ENCODE measurements at regions of chr13 and their contacts with region 1.

Region 1: DNA sequence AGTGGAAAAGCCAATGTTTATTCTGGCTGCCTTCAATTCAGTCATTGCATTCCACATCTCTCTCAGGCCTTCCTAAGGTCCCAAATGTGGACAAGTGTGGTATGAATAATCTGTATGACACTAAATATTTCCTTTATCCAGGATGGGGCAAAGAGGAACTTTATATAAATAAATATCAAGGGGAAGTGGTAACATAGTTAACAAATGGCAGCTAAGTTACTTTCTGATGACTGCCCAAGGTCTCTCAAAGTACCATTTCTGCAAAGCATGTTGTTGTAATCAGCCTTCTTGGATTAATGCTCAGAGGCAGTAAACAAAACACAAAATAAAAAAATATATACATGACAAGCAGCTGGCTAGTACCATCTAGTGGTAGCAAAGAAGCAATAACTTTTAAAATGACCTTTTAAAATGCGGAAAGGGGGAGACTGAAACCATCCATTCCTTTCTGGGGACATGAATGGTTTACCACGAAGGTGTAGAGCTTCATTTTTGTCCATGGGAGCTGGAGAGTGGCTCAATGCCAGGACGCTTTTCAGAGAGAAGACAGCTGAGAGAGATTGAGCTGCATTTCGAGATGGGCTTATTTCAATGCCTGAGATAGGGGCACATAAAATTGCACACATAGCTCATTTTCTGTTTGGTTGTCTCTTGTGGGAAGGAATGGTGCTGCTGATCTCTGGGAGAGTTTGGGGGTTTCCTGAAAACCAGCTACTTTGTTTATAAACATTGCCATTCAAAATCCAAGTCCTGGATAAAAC is 259.2 kb downstream of the RFC3 start:
- DNase-seq: no peak
- ATAC-seq: peak in 2 of 8 donors; percentile 33 to 57
- H3K4me3 ChIP-seq: no peak overlapping the region
- H3K27ac ChIP-seq: no peak overlapping the region
- H3K4me1 ChIP-seq: peaks cover 0 to 11% (median 5%) of the 10 kb centered on the region in 9 donors
- H3K27me3 ChIP-seq: no peaks in the 10 kb centered on the region
- CTCF ChIP-seq: peak; percentile 40 to 82 (median 61)

Region 2: DNA sequence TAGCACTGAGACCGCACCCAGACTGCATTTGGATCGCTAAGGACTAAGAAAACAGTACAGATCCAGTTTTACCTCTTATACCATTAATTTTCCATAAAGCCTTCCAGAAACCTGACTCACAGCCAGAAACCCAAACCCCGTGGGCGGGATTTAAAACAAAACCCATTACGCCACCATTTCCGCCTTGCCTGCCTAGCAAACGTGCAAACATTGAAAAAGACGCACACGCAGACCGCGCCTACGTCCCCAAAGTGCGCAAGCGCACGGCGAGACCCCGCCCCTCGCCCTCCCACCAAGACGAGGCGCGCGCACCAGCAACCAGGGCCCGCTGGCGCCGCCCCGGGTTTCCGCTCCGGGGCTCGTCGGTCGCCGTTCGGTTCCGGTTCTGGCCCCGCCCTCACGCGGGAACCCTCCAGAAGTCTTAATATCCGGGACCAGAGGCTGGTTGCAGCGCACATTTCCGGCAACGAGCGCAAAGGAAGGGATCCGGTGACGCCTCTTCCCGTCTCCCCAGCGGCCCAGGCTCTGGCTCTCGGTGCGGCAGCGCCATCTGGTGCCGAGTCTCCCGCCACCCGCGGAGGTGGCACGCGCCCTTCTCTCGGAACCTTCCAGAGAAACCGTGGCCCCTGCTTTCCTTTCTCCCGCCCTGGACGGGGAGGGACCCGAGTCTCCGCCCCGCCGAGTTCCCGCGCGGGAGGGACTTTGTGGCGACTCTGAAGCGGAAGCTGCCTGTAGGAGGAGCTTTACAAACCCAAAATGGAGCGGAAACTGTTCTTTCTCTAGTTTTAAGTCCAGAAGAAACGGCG is 534.6 kb before region 1 on chr13:
- intact Hi-C with region 1: loop called in 1 of 10 experiments (anchors 10 kb)
- DNase-seq: peak; percentile 98 to 99
- ATAC-seq: peak; percentile 94 to 98 (median 96)
- H3K4me3 ChIP-seq: peak overlapping the region; percentile 11 to 62 (median 52)
- H3K27ac ChIP-seq: peak overlapping the region; percentile 92 to 99 (median 96)
- H3K4me1 ChIP-seq: peaks cover 2 to 45% (median 33%) of the 10 kb centered on the region in 9 donors
- H3K27me3 ChIP-seq: no peaks in the 10 kb centered on the region
- CTCF ChIP-seq: peak; percentile 75 to 97 (median 92)

Region 3: DNA sequence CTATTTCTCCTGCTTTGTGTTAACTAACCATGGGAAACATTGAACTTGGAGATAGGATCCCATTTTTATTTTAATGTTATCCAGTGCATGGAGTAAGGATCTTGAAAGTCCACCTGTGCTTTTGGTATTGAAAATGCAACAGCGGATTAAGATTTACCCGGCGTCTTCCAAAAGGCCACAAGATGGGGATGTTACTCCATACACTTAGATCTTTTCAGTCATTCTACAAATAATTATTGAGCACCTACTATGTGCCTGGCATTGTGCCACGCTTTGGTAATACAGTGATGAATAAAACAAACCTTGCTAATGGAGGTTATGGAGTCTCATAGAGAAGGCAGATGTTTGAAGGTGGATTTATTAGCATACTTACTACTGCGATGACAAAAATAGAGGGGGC is 202.2 kb before region 1 on chr13:
- intact Hi-C with region 1: loop called in 1 of 10 experiments (anchors 5 kb)
- DNase-seq: no peak
- ATAC-seq: no peak
- H3K4me3 ChIP-seq: no peak overlapping the region
- H3K27ac ChIP-seq: no peak overlapping the region
- H3K4me1 ChIP-seq: peaks cover 0 to 11% (median 0%) of the 10 kb centered on the region in 9 donors
- H3K27me3 ChIP-seq: no peaks in the 10 kb centered on the region
- CTCF ChIP-seq: peak in 2 of 9 donors; percentile 10 to 15

Region 4: GRCh38 chr13:33940898-33941297 is 136.2 kb before region 1 on chr13:
- intact Hi-C with region 1: loop called in 2 of 10 experiments (anchors 10 kb)
- DNase-seq: no peak
- ATAC-seq: no peak
- H3K4me3 ChIP-seq: no peak overlapping the region
- H3K27ac ChIP-seq: no peak overlapping the region
- H3K4me1 ChIP-seq: peaks cover 0 to 8% (median 0%) of the 10 kb centered on the region in 9 donors
- H3K27me3 ChIP-seq: no peaks in the 10 kb centered on the region
- CTCF ChIP-seq: no peak

Region 5: GRCh38 chr13:35164324-35164932 is 1087.3 kb after region 1 on chr13:
- intact Hi-C with region 1: loop called in 7 of 10 experiments (anchors 5 to 10 kb)
- DNase-seq: no peak
- ATAC-seq: peak in 3 of 8 donors; percentile 54 to 71 (median 65)
- H3K4me3 ChIP-seq: no peak overlapping the region
- H3K27ac ChIP-seq: no peak overlapping the region
- H3K4me1 ChIP-seq: peaks cover 0 to 20% (median 6%) of the 10 kb centered on the region in 9 donors
- H3K27me3 ChIP-seq: no peaks in the 10 kb centered on the region
- CTCF ChIP-seq: peak; percentile 51 to 82 (median 71)

Measured in heart right ventricle (tissue), 16 donors.